PC-9 (cell line): ENCODE measurements at regions of chr9 and their contacts with region 1.

Region 1: GRCh38 chr9:129258124-129258822 is 80.2 kb upstream of the IER5L start:
- DNase-seq: peak; percentile 78 to 90
- H3K4me3 ChIP-seq: peak overlapping the region; percentile 50
- H3K27ac ChIP-seq: no peak overlapping the region
- H3K4me1 ChIP-seq: peaks cover 16% of the 10 kb centered on the region
- H3K27me3 ChIP-seq: 0 out of 2 replicates have a peak, but pooled peaks cover 5% of the 10 kb centered on the region
- CTCF ChIP-seq: no peak

Region 2: GRCh38 chr9:129139233-129139992 is 118.9 kb before region 1 on chr9:
- CTCF ChIA-PET with region 1: no interaction called
- POLR2A ChIA-PET with region 1: no interaction called
- intact Hi-C with region 1: no loop called
- DNase-seq: peak; percentile 65 to 81
- H3K4me3 ChIP-seq: peak overlapping the region; percentile 91; the same call in 1 of the 2 replicates
- H3K27ac ChIP-seq: peak overlapping the region; percentile 100
- H3K4me1 ChIP-seq: peaks cover 42% of the 10 kb centered on the region
- H3K27me3 ChIP-seq: no peaks in the 10 kb centered on the region
- CTCF ChIP-seq: peak; percentile 97

Region 3: GRCh38 chr9:129208207-129209032 is 49.9 kb before region 1 on chr9:
- CTCF ChIA-PET with region 1: no interaction called
- POLR2A ChIA-PET with region 1: interaction called, 23 read pairs
- intact Hi-C with region 1: no loop called
- DNase-seq: no peak
- H3K4me3 ChIP-seq: no peak overlapping the region
- H3K27ac ChIP-seq: no peak overlapping the region
- H3K4me1 ChIP-seq: no peaks in the 10 kb centered on the region
- H3K27me3 ChIP-seq: no peaks in the 10 kb centered on the region
- CTCF ChIP-seq: no peak